AG04450 (cell line): ENCODE measurements at regions of chr20 and their contacts with region 1.

Region 1: GRCh38 chr20:14986026-14986655 is 648.7 kb upstream of the FLRT3 start:
- DNase-seq: no peak
- H3K4me3 ChIP-seq: no peak overlapping the region
- H3K27ac ChIP-seq: no peak overlapping the region
- H3K27me3 ChIP-seq: no peaks in the 10 kb centered on the region
- CTCF ChIP-seq: no peak

Region 2: DNA sequence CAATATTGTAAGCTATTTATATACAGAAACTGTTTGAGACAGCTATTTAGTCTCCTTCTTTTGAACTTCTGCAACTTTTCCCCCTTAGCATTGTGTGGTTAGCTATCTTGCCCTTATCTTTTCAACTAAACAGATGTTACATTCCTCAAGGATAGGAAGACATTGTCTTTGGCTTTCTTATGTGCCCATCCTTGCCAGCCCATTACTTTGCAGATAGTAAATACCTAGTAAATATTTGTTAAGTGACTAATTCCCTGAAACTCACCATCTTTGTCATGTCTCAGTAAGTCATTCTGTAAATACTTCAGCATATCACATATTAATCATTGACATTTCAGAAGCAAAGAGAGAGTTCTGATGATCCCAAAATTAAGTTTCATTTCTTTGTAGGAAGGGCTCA is 579.6 kb before region 1 on chr20:
- CTCF ChIA-PET with region 1: interaction called, 14 read pairs
- POLR2A ChIA-PET with region 1: no interaction called
- DNase-seq: no peak
- H3K4me3 ChIP-seq: no peak overlapping the region
- H3K27ac ChIP-seq: no peak overlapping the region
- H3K27me3 ChIP-seq: no peaks in the 10 kb centered on the region
- CTCF ChIP-seq: no peak

Region 3: DNA sequence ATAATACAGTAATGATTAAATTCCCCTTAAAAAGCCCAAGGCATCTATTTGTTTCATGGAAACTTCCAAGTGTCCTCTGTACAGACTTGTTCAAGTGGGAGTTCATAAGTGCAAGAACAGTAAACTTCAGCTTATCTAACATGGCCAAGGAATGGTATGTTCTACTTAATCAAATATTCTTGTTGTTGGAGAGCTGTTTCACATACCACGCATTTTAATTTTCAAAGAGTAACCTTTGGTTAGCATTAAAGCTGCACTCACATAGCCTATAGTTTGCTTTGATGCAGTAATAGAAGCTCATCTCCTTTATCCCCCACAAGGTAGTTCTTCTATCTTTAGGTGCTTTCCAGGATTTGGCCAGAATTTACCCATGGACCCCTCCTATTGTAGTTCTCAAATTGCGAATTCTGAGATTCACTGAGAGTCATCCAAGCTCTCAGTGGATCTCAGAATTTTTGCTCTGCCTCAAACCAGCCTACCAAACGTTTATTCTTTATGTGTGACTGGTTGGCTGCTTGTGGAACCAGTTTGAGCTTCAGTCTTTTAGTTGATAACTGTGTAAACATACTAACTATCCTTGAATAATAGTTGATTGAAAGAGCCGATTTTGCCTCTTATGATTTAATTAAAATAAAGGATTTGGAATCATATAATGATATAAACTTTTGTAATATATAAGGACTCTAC is 19.3 kb after region 1 on chr20:
- CTCF ChIA-PET with region 1: no interaction called
- POLR2A ChIA-PET with region 1: no interaction called
- DNase-seq: no peak
- H3K4me3 ChIP-seq: no peak overlapping the region
- H3K27ac ChIP-seq: no peak overlapping the region
- H3K27me3 ChIP-seq: no peaks in the 10 kb centered on the region
- CTCF ChIP-seq: no peak

Region 4: GRCh38 chr20:15162079-15162647 is 176.0 kb after region 1 on chr20:
- CTCF ChIA-PET with region 1: no interaction called
- POLR2A ChIA-PET with region 1: no interaction called
- DNase-seq: no peak
- H3K4me3 ChIP-seq: no peak overlapping the region
- H3K27ac ChIP-seq: no peak overlapping the region
- H3K27me3 ChIP-seq: no peaks in the 10 kb centered on the region
- CTCF ChIP-seq: no peak